IMR-90 (cell line): ENCODE measurements at regions of chr1 and their contacts with region 1.

Region 1: GRCh38 chr1:243850452-243851256 is 611 bp upstream of the AKT3 start:
- DNase-seq: peak; percentile 70
- ATAC-seq: peak; percentile 73
- H3K4me3 ChIP-seq: peak overlapping the region; percentile 86
- H3K27ac ChIP-seq: peak overlapping the region; percentile 78
- H3K4me1 ChIP-seq: no peaks in the 10 kb centered on the region; the same call in 1 of the 2 replicates
- H3K27me3 ChIP-seq: no peaks in the 10 kb centered on the region
- CTCF ChIP-seq: no peak
- POLR2A ChIP-seq: peak; percentile 66; the same call in 1 of the 2 replicates
- RAD21 ChIP-seq: no peak

Region 2: DNA sequence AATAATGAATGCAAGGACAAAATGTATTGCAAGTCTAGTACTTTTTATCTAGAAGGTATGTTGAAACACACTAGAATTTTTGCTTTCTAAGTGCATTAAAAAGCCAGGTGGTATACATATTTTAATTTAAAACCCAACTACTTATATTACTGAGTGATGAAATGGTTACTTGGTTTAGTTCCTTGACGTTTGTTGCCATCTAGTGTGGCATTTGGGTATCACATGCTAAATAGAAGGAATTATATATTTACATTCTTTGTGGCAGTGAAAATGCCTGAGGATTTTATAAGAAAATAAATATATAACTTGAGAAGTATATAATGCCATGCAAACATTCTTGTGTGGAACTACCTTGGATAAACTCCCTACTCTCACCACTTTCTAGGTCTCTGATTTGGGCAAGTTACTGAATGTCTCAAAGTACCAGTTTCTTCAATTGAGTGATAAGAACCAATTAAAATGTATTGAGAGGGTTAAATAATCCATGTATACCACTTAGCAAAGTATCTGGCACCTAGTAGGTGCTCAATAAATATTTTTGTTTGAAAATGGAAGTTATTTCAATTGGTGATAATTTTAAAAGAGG is 525.3 kb before region 1 on chr1:
- CTCF ChIA-PET with region 1: no interaction called
- POLR2A ChIA-PET with region 1: no interaction called
- dilution Hi-C with region 1: no loop called
- in situ Hi-C with region 1: no loop called
- intact Hi-C with region 1: no loop called
- DNase-seq: peak; percentile 82
- ATAC-seq: peak; percentile 88
- H3K4me3 ChIP-seq: no peak overlapping the region
- H3K27ac ChIP-seq: no peak overlapping the region
- H3K4me1 ChIP-seq: peaks cover 4% of the 10 kb centered on the region; the same call in 1 of the 2 replicates
- H3K27me3 ChIP-seq: no peaks in the 10 kb centered on the region
- CTCF ChIP-seq: peak; percentile 90
- POLR2A ChIP-seq: no peak
- RAD21 ChIP-seq: peak; percentile 95

Region 3: DNA sequence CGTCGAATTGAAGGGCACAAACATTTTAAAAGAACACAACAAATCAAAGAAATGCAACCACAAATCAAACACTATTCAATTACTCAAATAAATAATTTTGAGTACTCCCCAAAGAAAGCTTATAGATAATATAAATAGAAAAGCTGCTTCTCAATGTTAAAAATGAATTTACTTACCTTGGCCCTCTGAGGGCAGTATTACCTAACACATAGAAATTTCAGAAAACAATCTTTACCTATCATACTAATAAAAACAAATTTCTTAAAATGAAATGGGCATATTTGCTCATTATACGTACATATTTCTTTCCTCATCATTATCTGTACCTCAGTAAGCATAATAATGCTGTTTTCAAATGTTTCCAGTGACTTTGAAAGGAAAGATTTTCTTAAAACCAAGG is 142.4 kb before region 1 on chr1:
- CTCF ChIA-PET with region 1: no interaction called
- POLR2A ChIA-PET with region 1: no interaction called
- dilution Hi-C with region 1: no loop called
- in situ Hi-C with region 1: no loop called
- intact Hi-C with region 1: loop called (anchors 2 kb)
- DNase-seq: no peak
- ATAC-seq: no peak
- H3K4me3 ChIP-seq: no peak overlapping the region
- H3K27ac ChIP-seq: no peak overlapping the region
- H3K4me1 ChIP-seq: peaks cover 2% of the 10 kb centered on the region; the same call in 1 of the 2 replicates
- H3K27me3 ChIP-seq: no peaks in the 10 kb centered on the region
- CTCF ChIP-seq: peak; percentile 42
- POLR2A ChIP-seq: no peak
- RAD21 ChIP-seq: peak; percentile 50

Region 4: GRCh38 chr1:243837907-243838535 is 12.6 kb before region 1 on chr1:
- CTCF ChIA-PET with region 1: no interaction called
- POLR2A ChIA-PET with region 1: no interaction called
- dilution Hi-C with region 1: no loop called
- in situ Hi-C with region 1: no loop called
- intact Hi-C with region 1: no loop called
- DNase-seq: no peak
- ATAC-seq: no peak
- H3K4me3 ChIP-seq: no peak overlapping the region
- H3K27ac ChIP-seq: no peak overlapping the region
- H3K4me1 ChIP-seq: peaks cover 5% of the 10 kb centered on the region; the same call in 1 of the 2 replicates
- H3K27me3 ChIP-seq: no peaks in the 10 kb centered on the region
- CTCF ChIP-seq: no peak
- POLR2A ChIP-seq: no peak
- RAD21 ChIP-seq: no peak

Region 5: GRCh38 chr1:243917177-243917862 is 66.7 kb after region 1 on chr1:
- CTCF ChIA-PET with region 1: interaction called, 3 read pairs
- POLR2A ChIA-PET with region 1: no interaction called
- dilution Hi-C with region 1: no loop called
- in situ Hi-C with region 1: no loop called
- intact Hi-C with region 1: loop called (anchors 2 kb)
- DNase-seq: peak; percentile 93
- ATAC-seq: peak; percentile 97
- H3K4me3 ChIP-seq: peak overlapping the region; percentile 51
- H3K27ac ChIP-seq: peak overlapping the region; percentile 27
- H3K4me1 ChIP-seq: peaks cover 8% of the 10 kb centered on the region
- H3K27me3 ChIP-seq: no peaks in the 10 kb centered on the region
- CTCF ChIP-seq: 0 out of 2 replicates have a peak, but pooled peaks have one; percentile 11
- POLR2A ChIP-seq: peak; percentile 92
- RAD21 ChIP-seq: peak; percentile 15; the same call in 1 of the 2 replicates

Region 6: DNA sequence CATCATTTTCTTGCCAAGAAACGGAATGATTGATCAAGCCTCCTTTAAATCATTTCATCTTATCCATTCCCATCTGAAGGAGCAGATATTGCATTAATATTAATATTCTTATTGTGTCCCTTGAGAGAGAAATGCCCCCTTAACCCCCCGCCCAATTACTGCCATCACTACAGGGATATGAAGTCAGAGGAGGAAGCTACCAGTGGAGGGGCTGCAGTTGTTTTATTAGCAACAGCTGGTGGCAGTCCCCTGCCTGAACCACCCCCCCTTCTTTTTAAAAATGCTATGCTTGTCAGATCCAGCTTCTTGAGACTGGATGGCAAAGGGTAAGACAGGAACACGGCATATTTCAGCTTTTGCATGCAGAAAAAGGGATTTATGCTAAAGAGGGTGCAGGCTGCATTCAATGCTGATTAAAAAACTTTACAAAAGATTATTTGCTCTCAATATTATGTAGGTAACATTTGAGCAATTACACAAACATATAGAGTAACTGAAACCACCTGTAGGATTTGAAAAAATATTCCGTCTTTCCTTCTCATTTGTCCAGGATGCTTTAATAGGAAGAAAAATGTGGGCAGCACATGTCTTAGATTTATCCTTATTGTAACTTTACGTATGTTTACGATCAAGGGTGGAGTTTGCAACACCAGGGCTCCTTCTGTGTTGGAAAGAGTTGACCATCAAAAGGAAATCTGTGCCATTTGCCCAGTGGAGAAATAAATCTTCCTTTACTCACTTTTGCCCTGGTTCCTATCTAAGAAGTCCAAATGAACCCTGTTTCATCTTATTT is 278.1 kb after region 1 on chr1:
- CTCF ChIA-PET with region 1: no interaction called
- POLR2A ChIA-PET with region 1: interaction called, 13 read pairs
- dilution Hi-C with region 1: no loop called
- in situ Hi-C with region 1: no loop called
- intact Hi-C with region 1: no loop called
- DNase-seq: no peak
- ATAC-seq: no peak
- H3K4me3 ChIP-seq: no peak overlapping the region
- H3K27ac ChIP-seq: no peak overlapping the region
- H3K4me1 ChIP-seq: no peaks in the 10 kb centered on the region
- H3K27me3 ChIP-seq: peaks cover 15% of the 10 kb centered on the region
- CTCF ChIP-seq: no peak
- POLR2A ChIP-seq: no peak
- RAD21 ChIP-seq: no peak